ENCODE measurements at regions of chr2 and their contacts with region 1.

Region 1: DNA sequence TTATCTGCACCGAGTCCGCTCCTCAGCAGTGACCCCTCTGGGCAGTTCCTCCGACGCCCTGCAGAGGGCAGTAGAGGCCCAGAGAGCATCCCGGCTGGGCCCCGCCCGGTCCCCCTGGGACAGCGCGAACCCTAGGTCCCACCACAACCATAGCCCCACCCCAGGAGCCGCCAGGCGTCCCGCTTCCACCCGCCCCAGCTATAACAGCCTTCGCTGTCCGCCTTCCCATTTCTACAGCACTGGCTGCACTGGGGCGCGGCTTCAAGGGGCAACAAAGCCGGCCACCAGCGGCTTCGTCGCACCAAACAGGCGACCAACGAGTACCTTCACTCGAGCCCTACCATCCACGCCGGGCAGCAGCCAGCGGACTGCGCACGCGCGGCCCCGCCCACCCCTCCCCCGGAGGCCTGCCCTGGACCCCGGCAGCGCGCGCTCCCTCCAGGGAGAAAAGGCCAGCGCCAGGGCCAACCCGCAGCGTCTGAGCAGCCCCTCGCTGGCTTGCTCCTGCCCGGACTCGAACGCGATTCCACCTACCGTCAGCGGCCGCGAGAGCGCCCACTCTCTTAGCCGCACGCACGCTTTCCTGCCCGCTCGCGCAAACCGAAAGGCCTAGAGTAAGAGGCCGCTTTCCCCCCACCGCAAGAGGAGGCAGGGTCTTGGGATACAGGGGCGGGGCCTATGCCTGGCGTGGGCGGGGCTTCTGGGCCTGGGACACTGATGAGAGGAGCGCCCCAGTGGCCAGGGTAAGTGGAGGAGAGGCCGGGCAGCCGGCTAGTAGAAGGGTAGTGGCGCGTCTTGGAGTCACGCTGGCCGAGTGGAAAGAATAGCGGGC is at the start of gene NHEJ1:
- DNase-seq: peak; percentile 94
- ATAC-seq: peak; percentile 89
- H3K4me3 Mint-ChIP-seq: peak within 1 kb of the TSS; percentile 88
- H3K27ac Mint-ChIP-seq: peak within 1 kb of the TSS; percentile 95
- H3K4me1 Mint-ChIP-seq: peaks cover 20% of the 10 kb centered on the region
- H3K27me3 Mint-ChIP-seq: no peaks in the 10 kb centered on the region
- total RNA-seq, gene NHEJ1: 19.1 to 23.1 TPM

Region 2: DNA sequence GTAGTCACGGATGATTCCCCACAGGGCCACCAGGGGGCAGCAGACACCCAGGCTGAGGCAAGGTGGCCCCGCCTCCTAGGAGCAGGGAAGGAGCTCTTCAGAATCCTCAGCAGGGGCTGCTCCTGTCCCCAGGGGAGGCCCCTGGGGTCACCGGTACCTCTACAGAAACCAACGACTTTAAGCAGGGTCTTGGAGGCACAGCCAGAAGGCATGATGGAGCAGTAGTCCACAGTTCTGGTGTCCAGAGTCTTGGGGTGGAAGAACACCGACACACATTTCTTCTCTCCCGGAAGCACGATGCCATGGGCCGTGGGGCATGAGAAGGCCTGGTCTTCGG is 130.6 kb before region 1 on chr2:
- CTCF ChIA-PET with region 1: interaction called, 29 read pairs
- POLR2A ChIA-PET with region 1: no interaction called
- DNase-seq: peak; percentile 82
- ATAC-seq: peak; percentile 91
- H3K4me3 Mint-ChIP-seq: no peak overlapping the region
- H3K27ac Mint-ChIP-seq: no peak overlapping the region
- H3K4me1 Mint-ChIP-seq: no peaks in the 10 kb centered on the region
- H3K27me3 Mint-ChIP-seq: peaks cover 22% of the 10 kb centered on the region

Region 3: DNA sequence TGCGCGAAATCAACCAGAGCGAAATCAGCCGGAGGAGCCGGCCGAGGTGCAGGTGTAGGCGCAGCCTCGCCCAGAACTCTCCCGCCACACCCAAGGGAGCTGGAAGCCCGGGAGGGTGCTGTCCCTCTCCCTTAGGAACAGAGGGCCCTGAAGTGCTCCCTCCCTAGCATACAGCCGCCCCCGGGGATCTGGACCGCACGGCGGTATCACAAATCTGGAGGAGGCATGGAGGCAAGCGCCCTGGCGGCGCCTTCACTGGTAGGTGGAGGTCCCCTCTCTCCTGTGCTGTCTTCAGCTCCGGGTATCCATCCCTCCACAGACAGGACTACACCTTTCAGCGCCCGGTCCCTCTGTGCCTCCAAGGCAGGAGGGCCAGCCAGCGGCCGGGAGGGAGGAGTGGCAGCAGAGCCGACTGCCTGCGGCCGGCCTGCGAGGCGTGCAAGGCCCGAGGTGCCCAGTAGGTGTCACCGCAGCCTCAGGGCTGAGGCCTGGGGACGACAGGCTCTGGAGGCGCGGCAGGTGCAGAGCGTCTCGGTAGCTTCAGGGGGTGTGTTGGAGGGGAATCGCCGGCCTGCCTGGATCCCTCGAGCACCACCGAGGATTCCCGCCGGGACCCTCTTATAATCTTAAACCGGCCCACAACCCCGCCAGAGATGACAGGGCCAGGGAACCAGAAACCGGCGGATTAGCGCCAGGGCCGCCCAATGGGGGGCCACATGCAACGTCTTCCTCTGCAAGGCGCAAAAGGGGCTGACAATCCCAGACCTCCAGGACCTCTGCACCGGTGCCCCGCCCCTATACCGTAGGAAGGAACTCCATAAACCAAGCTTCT is 102.5 kb before region 1 on chr2:
- CTCF ChIA-PET with region 1: interaction called, 47 read pairs
- POLR2A ChIA-PET with region 1: no interaction called
- DNase-seq: peak; percentile 82
- ATAC-seq: peak; percentile 92
- H3K4me3 Mint-ChIP-seq: peak overlapping the region; percentile 42
- H3K27ac Mint-ChIP-seq: no peak overlapping the region
- H3K4me1 Mint-ChIP-seq: peaks cover 21% of the 10 kb centered on the region
- H3K27me3 Mint-ChIP-seq: peaks cover 62% of the 10 kb centered on the region

Region 4: GRCh38 chr2:219073413-219074129 is 86.8 kb before region 1 on chr2:
- CTCF ChIA-PET with region 1: interaction called, 16 read pairs
- POLR2A ChIA-PET with region 1: no interaction called
- DNase-seq: peak; percentile 28
- ATAC-seq: peak; percentile 42
- H3K4me3 Mint-ChIP-seq: no peak overlapping the region
- H3K27ac Mint-ChIP-seq: no peak overlapping the region
- H3K4me1 Mint-ChIP-seq: no peaks in the 10 kb centered on the region
- H3K27me3 Mint-ChIP-seq: no peaks in the 10 kb centered on the region

Region 5: DNA sequence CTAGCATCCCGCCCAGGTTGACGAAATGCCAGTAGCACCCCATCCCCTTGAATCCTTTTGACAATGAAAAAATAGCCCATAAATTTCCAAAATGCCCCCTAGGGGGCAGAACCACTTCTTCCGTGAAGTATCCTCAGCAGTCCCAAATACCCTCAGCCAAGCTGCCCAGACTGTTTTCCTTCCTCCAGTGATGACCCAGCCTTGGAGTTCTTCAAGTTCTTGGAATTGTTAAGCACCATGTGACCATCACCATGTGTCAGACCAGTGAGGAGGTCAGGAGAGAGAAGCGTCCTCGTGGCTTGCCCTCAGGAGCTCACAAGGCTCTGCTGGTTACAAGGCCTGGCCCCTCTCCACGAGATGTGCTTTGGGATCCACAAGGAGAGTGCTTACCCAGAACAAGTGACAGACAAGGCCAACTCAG is 10.8 kb after region 1 on chr2:
- CTCF ChIA-PET with region 1: interaction called, 20 read pairs
- POLR2A ChIA-PET with region 1: interaction called, 25 read pairs
- DNase-seq: peak; percentile 54
- ATAC-seq: peak; percentile 50
- H3K4me3 Mint-ChIP-seq: no peak overlapping the region
- H3K27ac Mint-ChIP-seq: no peak overlapping the region
- H3K4me1 Mint-ChIP-seq: peaks cover 30% of the 10 kb centered on the region
- H3K27me3 Mint-ChIP-seq: no peaks in the 10 kb centered on the region

Region 6: DNA sequence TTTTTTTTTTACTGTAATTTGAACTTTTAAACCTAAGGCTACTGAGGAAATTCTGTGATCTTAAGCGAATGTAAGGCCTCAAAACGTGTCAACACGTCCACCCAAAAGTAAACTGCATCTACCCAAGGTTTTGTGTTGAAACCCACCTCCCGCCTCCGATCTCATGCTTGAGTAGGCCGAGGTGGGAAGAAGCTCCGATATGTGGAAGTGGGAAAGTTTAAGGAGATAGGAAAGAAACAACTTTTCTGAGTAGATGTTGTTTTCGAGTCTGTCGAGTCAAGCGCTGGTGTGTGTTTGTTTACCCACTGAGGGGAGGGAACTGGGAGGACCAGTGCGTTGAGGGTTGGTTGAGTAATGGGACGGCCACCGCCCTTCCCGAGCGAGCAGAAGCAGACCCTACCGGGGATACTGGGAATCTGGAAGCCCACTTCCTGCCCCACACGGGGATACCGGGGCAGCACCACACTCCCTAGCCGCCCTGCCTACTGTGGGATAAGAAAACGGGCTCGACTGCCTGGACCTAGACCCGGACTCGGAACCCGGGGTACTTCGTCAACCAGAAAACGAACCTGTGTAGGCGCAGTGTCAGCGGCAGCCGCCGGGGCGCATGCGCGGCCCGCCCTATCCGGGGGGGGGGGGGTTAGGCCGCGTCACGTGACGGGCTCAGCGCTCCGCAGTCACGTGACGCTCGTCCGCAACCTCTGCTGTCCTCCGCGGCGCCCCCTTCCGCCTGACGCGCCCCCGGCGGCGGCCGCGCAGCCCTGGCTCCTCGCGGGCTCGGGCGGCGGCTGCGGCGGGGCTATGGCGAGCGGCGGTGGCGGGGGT is 17.4 kb after region 1 on chr2 and contains the start of gene RETREG2:
- CTCF ChIA-PET with region 1: interaction called, 20 read pairs
- POLR2A ChIA-PET with region 1: interaction called, 25 read pairs
- DNase-seq: peak; percentile 82
- ATAC-seq: peak; percentile 55
- H3K4me3 Mint-ChIP-seq: peak within 1 kb of the TSS; percentile 92
- H3K27ac Mint-ChIP-seq: peak within 1 kb of the TSS; percentile 95
- H3K4me1 Mint-ChIP-seq: peaks cover 61% of the 10 kb centered on the region
- H3K27me3 Mint-ChIP-seq: no peaks in the 10 kb centered on the region
- total RNA-seq, gene RETREG2: 104 to 111 TPM

Region 7: DNA sequence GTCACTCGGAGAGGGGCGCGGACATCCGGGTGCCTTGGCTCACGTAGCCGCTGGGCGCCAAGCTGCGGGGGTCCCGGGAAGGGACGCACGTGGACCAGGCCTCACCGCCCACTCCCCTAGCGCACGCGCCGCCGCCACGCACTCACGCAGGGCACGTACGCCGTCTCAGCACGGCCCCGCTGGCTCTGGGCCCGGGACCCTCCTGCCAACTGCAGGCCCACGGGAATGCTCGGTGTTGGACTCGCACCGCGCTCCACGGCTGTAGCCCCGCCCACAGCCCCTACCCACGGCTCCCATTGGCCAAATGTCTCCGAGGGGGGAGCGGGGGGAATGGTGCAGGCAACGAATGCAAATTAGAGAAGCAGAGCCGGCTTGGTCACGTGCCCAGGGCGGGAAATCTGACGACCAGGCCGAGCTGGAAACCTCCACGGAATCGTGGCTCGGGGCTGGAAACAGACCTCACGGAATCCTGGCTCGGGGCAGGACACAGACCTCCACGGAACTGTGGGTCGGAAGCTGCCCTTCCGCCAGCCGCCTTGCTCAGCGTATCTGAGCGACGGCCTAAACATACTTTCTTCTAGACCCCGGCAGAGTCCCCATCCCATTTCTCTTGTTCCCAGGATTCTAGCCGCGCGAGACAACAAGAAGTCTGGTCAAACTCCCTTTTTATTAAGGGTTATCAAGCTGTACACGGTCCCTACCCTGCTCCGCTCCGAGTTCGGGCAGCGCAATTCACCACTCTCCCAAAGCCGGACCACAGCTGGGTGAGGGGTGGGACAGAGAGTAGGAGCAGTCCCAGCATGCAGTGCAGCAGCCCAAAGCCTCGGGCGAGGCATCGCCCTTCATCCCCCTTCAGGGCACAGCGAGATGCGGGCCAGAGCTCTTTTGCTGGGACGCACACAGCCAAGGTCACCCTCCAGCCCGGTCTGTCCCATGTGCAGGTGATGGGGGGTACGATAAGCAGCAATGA is 58.6 kb after region 1 on chr2 and contains the start of gene ABCB6:
- CTCF ChIA-PET with region 1: interaction called, 25 read pairs
- POLR2A ChIA-PET with region 1: no interaction called
- DNase-seq: peak; percentile 87
- ATAC-seq: peak; percentile 77
- H3K4me3 Mint-ChIP-seq: peak within 1 kb of the TSS; percentile 77
- H3K27ac Mint-ChIP-seq: peak within 1 kb of the TSS; percentile 75
- H3K4me1 Mint-ChIP-seq: peaks cover 26% of the 10 kb centered on the region
- H3K27me3 Mint-ChIP-seq: no peaks in the 10 kb centered on the region
- total RNA-seq, gene ABCB6: 11.6 to 11.9 TPM